Prostate gland (tissue), 2 donors: ENCODE measurements at regions of chr10 and their contacts with region 1.

Region 1: GRCh38 chr10:68331455-68332258 is at the start of gene HNRNPH3:
- DNase-seq: peak; percentile 98
- H3K4me3 ChIP-seq: peak within 1 kb of the TSS; percentile 66 to 90
- H3K27ac ChIP-seq: peak within 1 kb of the TSS; percentile 94 to 98
- H3K4me1 ChIP-seq: peaks cover 9% of the 10 kb centered on the region
- H3K27me3 ChIP-seq: no peaks in the 10 kb centered on the region
- CTCF ChIP-seq: peak in 1 of 4 experiments; percentile 20
- POLR2A ChIP-seq: peak; percentile 100
- total RNA-seq, gene HNRNPH3: 29.1 to 47.5 TPM

Region 2: DNA sequence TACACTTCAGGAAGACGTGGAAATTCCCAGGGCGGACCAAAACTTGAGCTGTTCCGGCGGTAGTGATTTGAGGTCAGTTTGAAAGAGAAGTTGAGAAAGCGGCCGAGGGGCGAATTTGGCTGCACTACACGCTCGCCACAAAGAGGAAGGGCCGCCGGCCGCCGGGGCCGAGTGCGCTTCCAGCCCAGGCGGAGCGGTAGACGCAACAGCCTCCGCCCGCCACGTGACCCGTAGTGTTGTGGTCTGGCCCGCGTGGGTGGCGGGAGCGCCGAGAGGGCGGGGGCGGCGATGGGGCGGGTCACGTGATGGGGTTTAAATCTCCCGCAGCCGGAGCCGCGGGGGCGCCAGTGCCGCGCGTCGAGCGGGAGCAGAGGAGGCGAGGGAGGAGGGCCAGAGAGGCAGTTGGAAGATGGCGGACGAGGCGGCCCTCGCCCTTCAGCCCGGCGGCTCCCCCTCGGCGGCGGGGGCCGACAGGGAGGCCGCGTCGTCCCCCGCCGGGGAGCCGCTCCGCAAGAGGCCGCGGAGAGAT is 447.3 kb before region 1 on chr10 and contains the start of gene SIRT1:
- intact Hi-C with region 1: loop called (anchors 10 kb)
- DNase-seq: peak; percentile 97
- H3K4me3 ChIP-seq: peak within 1 kb of the TSS; percentile 60 to 91
- H3K27ac ChIP-seq: peak within 1 kb of the TSS; percentile 92 to 97
- H3K4me1 ChIP-seq: peaks cover 2% of the 10 kb centered on the region
- H3K27me3 ChIP-seq: no peaks in the 10 kb centered on the region
- CTCF ChIP-seq: no peak
- POLR2A ChIP-seq: peak; percentile 92
- total RNA-seq, gene SIRT1: 22.0 to 46.2 TPM